Activated CD4-positive, alpha-beta T cell treated with anti-CD3 and anti-CD28 coated beads for 36 hours (primary cell): ENCODE measurements at regions of chr11 and their contacts with region 1.

Region 1: DNA sequence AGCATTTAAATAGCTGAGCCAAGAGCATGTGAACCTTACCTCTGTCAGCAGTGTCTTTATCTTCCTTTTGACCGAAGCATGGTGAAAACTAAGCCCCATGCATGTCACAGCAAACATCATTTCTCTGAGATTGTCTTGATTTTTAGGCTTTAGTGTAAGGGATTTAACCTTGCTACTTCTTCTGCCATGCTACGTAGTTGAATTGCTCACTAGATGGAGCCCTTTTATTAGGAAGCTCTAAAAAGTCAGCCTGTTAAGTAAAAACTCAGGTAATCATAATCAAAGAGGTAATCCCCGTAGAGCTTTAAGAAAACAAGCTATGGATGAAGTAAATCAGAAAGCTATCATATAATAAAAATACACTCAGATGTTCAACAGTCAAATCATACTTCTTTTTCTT is 149.5 kb downstream of the PGR start:
- DNase-seq: no peak
- ATAC-seq: no peak
- H3K4me3 Mint-ChIP-seq: no peak overlapping the region
- H3K27ac Mint-ChIP-seq: no peak overlapping the region
- H3K4me1 Mint-ChIP-seq: no peaks in the 10 kb centered on the region
- H3K27me3 Mint-ChIP-seq: no peaks in the 10 kb centered on the region

Region 2: DNA sequence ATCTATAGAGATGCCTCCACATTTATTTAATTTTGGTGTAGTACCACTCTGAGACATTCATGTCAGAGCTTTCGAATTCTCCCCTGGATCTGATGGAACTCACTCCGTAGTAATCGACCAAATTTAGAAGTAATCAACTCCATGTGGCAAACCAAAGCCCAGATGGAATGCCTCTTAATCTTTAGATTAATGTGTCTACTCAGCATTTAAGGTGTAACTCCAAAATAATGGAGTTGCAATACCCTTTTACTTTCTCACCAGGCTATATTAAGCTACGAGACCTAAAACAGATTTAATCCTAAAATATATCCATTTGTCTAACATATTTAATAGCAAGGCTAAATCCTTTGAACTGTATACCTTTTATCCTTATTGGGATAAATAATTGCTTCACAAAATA is 1486.1 kb before region 1 on chr11:
- CTCF ChIA-PET with region 1: no interaction called
- POLR2A ChIA-PET with region 1: no interaction called
- intact Hi-C with region 1: no loop called
- DNase-seq: no peak
- ATAC-seq: no peak
- H3K4me3 Mint-ChIP-seq: no peak overlapping the region
- H3K27ac Mint-ChIP-seq: no peak overlapping the region
- H3K4me1 Mint-ChIP-seq: no peaks in the 10 kb centered on the region
- H3K27me3 Mint-ChIP-seq: no peaks in the 10 kb centered on the region

Region 3: GRCh38 chr11:100936781-100937180 is 43.4 kb before region 1 on chr11:
- CTCF ChIA-PET with region 1: no interaction called
- POLR2A ChIA-PET with region 1: no interaction called
- intact Hi-C with region 1: loop called in 1 of 2 experiments (anchors 1 kb)
- DNase-seq: no peak
- ATAC-seq: no peak
- H3K4me3 Mint-ChIP-seq: no peak overlapping the region
- H3K27ac Mint-ChIP-seq: no peak overlapping the region
- H3K4me1 Mint-ChIP-seq: no peaks in the 10 kb centered on the region
- H3K27me3 Mint-ChIP-seq: no peaks in the 10 kb centered on the region